CD8-positive, alpha-beta T cell (primary cell): ENCODE measurements at regions of chr9 and their contacts with region 1.

Region 1: GRCh38 chr9:76393963-76394679 is at the start of gene RFK:
- DNase-seq: peak; percentile 89 to 96 (median 94)
- ATAC-seq: peak; percentile 88
- H3K4me3 ChIP-seq: peak within 1 kb of the TSS; percentile 89 to 96
- H3K4me3 Mint-ChIP-seq: peak within 1 kb of the TSS; percentile 90
- H3K27ac ChIP-seq: peak within 1 kb of the TSS; percentile 87 to 89
- H3K27ac Mint-ChIP-seq: peak within 1 kb of the TSS; percentile 97
- H3K4me1 ChIP-seq: peaks cover 19% of the 10 kb centered on the region
- H3K4me1 Mint-ChIP-seq: peaks cover 40% of the 10 kb centered on the region
- H3K27me3 ChIP-seq: no peaks in the 10 kb centered on the region
- H3K27me3 Mint-ChIP-seq: no peaks in the 10 kb centered on the region
- CTCF ChIP-seq: no peak
- total RNA-seq, gene RFK: 7.9 to 9.9 TPM

Region 2: GRCh38 chr9:74952281-74953151 is 1441.6 kb before region 1 on chr9 and contains the start of gene C9orf40:
- CTCF ChIA-PET with region 1: no interaction called
- POLR2A ChIA-PET with region 1: no interaction called
- intact Hi-C with region 1: loop called (anchors 2 to 10 kb)
- DNase-seq: peak; percentile 81 to 93 (median 92)
- ATAC-seq: peak; percentile 88
- H3K4me3 ChIP-seq: peak within 1 kb of the TSS; percentile 86 to 99
- H3K4me3 Mint-ChIP-seq: peak within 1 kb of the TSS; percentile 98
- H3K27ac ChIP-seq: peak within 1 kb of the TSS; percentile 87 to 95
- H3K27ac Mint-ChIP-seq: peak within 1 kb of the TSS; percentile 94
- H3K4me1 ChIP-seq: no peaks in the 10 kb centered on the region
- H3K4me1 Mint-ChIP-seq: peaks cover 20% of the 10 kb centered on the region
- H3K27me3 ChIP-seq: no peaks in the 10 kb centered on the region
- H3K27me3 Mint-ChIP-seq: no peaks in the 10 kb centered on the region
- CTCF ChIP-seq: peak; percentile 77
- total RNA-seq, gene C9orf40: 1.5 to 2.3 TPM

Region 3: GRCh38 chr9:75890472-75891276 is 503.4 kb before region 1 on chr9 and contains the start of gene PCSK5:
- CTCF ChIA-PET with region 1: no interaction called
- POLR2A ChIA-PET with region 1: interaction called, 7 read pairs
- intact Hi-C with region 1: loop called (anchors 1 to 5 kb)
- DNase-seq: peak; percentile 66 to 92 (median 85)
- ATAC-seq: peak; percentile 90
- H3K4me3 ChIP-seq: peak within 1 kb of the TSS; percentile 81 to 82
- H3K4me3 Mint-ChIP-seq: peak within 1 kb of the TSS; percentile 92
- H3K27ac ChIP-seq: peak within 1 kb of the TSS; percentile 60 to 70
- H3K27ac Mint-ChIP-seq: peak within 1 kb of the TSS; percentile 85
- H3K4me1 ChIP-seq: peaks cover 16% of the 10 kb centered on the region
- H3K4me1 Mint-ChIP-seq: peaks cover 54% of the 10 kb centered on the region
- H3K27me3 ChIP-seq: peaks cover 0 to 6% of the 10 kb centered on the region in 2 experiments
- H3K27me3 Mint-ChIP-seq: no peaks in the 10 kb centered on the region
- CTCF ChIP-seq: no peak
- total RNA-seq, gene PCSK5: 13.7 to 13.8 TPM

Region 4: GRCh38 chr9:76379512-76379911 is 14.6 kb before region 1 on chr9:
- CTCF ChIA-PET with region 1: interaction called, 11 read pairs
- POLR2A ChIA-PET with region 1: interaction called, 12 read pairs
- intact Hi-C with region 1: no loop called
- DNase-seq: no peak
- ATAC-seq: no peak
- H3K4me3 ChIP-seq: no peak overlapping the region
- H3K4me3 Mint-ChIP-seq: no peak overlapping the region
- H3K27ac ChIP-seq: no peak overlapping the region
- H3K27ac Mint-ChIP-seq: no peak overlapping the region
- H3K4me1 ChIP-seq: no peaks in the 10 kb centered on the region
- H3K4me1 Mint-ChIP-seq: no peaks in the 10 kb centered on the region
- H3K27me3 ChIP-seq: no peaks in the 10 kb centered on the region
- H3K27me3 Mint-ChIP-seq: no peaks in the 10 kb centered on the region
- CTCF ChIP-seq: no peak

Region 5: GRCh38 chr9:76576344-76576743 is 182.2 kb after region 1 on chr9:
- CTCF ChIA-PET with region 1: no interaction called
- POLR2A ChIA-PET with region 1: no interaction called
- intact Hi-C with region 1: loop called in 1 of 2 experiments (anchors 2 kb)
- DNase-seq: peak; percentile 10 to 89 (median 64)
- ATAC-seq: peak; percentile 76
- H3K4me3 ChIP-seq: no peak overlapping the region
- H3K4me3 Mint-ChIP-seq: peak overlapping the region; percentile 3
- H3K27ac ChIP-seq: peak overlapping the region in 1 of 2 experiments; percentile 42
- H3K27ac Mint-ChIP-seq: peak overlapping the region; percentile 12
- H3K4me1 ChIP-seq: peaks cover 3% of the 10 kb centered on the region
- H3K4me1 Mint-ChIP-seq: peaks cover 25% of the 10 kb centered on the region
- H3K27me3 ChIP-seq: no peaks in the 10 kb centered on the region
- H3K27me3 Mint-ChIP-seq: peaks cover 28% of the 10 kb centered on the region
- CTCF ChIP-seq: no peak

Region 6: DNA sequence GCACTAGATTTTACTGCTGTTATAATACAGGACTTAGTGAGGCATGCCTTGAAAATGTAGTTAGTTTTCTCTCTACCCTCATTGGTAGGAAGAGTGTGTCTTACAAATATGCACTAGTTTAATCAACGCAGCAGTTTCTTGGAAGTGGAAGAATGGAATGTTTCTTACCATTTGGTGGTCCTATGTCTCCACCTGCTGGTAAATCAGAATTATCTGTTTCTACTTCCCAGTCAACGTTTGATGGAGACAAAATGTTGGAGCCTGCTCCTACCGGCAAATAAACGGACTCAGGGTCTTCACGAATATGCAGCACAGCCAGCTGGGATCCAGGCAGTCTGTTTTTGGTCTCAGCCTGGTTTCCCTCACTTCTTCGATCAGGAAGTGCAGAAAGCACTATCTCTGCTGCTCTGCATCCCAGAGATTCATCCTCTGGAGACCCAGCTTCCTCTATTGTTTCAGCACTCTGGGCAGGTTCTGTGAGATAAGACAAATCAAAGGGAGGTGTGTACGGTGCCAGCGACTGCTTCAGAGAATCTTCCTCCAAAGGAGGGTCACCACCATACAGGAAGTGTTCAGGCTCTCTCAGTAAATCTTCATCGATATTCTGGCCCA is 310.6 kb after region 1 on chr9:
- CTCF ChIA-PET with region 1: interaction called, 12 read pairs
- POLR2A ChIA-PET with region 1: no interaction called
- intact Hi-C with region 1: loop called (anchors 2 kb)
- DNase-seq: peak in 3 of 9 experiments; percentile 7 to 76 (median 68)
- ATAC-seq: no peak
- H3K4me3 ChIP-seq: no peak overlapping the region
- H3K4me3 Mint-ChIP-seq: no peak overlapping the region
- H3K27ac ChIP-seq: no peak overlapping the region
- H3K27ac Mint-ChIP-seq: no peak overlapping the region
- H3K4me1 ChIP-seq: no peaks in the 10 kb centered on the region
- H3K4me1 Mint-ChIP-seq: peaks cover 4% of the 10 kb centered on the region
- H3K27me3 ChIP-seq: peaks cover 0 to 3% of the 10 kb centered on the region in 2 experiments
- H3K27me3 Mint-ChIP-seq: peaks cover 27% of the 10 kb centered on the region
- CTCF ChIP-seq: peak; percentile 61

Region 7: DNA sequence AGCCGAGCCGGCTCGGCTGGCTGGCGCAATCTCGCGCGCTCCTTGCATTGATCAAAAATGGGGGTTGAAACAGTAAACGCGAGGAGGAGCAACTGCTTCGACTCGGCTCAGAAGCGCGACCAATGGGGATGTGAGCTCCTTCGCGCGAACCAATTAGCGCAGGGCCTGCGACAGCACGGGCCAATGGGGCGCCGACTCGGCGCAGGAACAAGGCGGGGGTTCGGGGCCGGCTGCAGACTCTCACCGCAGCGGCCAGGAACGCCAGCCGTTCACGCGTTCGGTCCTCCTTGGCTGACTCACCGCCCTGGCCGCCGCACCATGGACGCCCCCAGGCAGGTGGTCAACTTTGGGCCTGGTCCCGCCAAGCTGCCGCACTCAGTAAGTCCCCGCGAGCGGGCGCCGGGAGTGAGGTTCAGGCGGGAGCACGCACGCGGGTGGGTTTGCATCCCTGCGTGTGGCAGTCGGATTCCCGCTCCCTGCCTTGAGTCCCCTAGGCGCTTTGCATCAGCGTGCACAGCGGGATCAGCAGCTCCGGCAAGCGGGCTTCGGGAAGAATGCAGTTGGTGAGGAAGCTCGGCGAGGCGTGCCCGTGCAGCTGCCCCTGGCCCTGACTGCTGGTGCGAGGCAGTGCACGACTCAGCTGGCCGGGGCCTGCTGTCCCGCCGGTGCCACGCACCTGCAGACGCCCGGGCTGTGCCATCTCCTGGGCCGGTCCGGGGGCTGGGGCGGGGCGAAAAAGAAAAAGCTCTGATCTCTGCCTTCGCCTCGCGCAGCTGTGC is 1903.0 kb after region 1 on chr9 and contains the start of gene PSAT1:
- CTCF ChIA-PET with region 1: no interaction called
- POLR2A ChIA-PET with region 1: no interaction called
- intact Hi-C with region 1: loop called in 1 of 2 experiments (anchors 5 kb)
- DNase-seq: peak; percentile 68 to 93 (median 85)
- ATAC-seq: peak; percentile 97
- H3K4me3 ChIP-seq: peak within 1 kb of the TSS; percentile 92 to 99
- H3K4me3 Mint-ChIP-seq: peak within 1 kb of the TSS; percentile 89
- H3K27ac ChIP-seq: peak within 1 kb of the TSS in 1 of 2 experiments; percentile 40
- H3K27ac Mint-ChIP-seq: peak within 1 kb of the TSS; percentile 72
- H3K4me1 ChIP-seq: peaks cover 21% of the 10 kb centered on the region
- H3K4me1 Mint-ChIP-seq: peaks cover 28% of the 10 kb centered on the region
- H3K27me3 ChIP-seq: no peaks in the 10 kb centered on the region
- H3K27me3 Mint-ChIP-seq: no peaks in the 10 kb centered on the region
- CTCF ChIP-seq: no peak
- total RNA-seq, gene PSAT1: 0.53 to 0.98 TPM